GM13976 (cell line): ENCODE measurements at regions of chr11 and their contacts with region 1.

Region 1: GRCh38 chr11:36265793-36266628 is 23.2 kb downstream of the COMMD9 start:
- DNase-seq: peak; percentile 72
- CTCF ChIP-seq: peak; percentile 94

Region 2: DNA sequence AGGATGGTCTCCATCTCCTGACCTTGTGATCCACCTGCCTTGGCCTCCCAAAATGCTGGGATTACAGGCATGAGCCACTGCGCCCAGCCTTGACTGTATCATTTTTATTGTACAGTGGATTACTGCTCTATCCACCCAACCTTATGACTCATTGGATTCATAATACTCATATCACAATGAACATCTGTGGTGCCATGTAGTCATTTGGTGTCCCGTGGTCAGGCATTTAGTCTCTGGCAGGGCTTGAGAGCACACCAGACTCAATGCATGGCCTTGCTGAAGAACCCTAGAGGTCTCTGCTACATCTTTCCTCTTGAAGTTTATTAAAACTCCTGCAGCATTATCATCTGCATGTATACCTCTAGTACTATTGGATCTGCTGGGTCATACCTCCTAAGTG is 420.2 kb before region 1 on chr11:
- in situ Hi-C with region 1: loop called (anchors 25 kb)
- DNase-seq: no peak
- CTCF ChIP-seq: no peak

Region 3: GRCh38 chr11:35992548-35992947 is 273.5 kb before region 1 on chr11:
- in situ Hi-C with region 1: no loop called
- DNase-seq: no peak
- CTCF ChIP-seq: no peak